ENCODE measurements at regions of chr1 and their contacts with region 1.

Region 1: DNA sequence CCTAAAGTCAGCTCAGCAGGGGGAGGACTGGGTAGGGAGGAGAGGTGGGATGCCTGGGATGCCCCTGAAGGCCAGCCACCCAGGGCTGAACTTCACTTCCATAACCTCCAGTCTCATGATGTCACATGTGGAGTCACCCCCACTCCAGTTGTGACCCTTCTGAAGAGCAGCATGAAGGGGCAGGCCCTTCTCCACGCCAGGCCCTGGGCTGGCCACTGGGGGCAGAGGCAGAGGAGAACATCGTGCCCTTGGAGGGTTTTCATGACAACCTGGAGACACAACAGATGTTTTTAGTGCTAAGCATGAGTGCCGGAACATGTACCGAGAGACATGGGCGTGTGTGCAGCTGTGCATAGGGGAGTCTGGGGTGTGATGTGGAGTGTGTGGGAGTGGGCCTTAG is 37.6 kb downstream of the FAAH start:
- DNase-seq: no peak
- H3K4me3 ChIP-seq: no peak overlapping the region
- H3K27ac ChIP-seq: no peak overlapping the region
- H3K4me1 ChIP-seq: no peaks in the 10 kb centered on the region
- H3K27me3 ChIP-seq: peaks cover 0 to 7% (median 3%) of the 10 kb centered on the region in 5 experiments

Region 2: DNA sequence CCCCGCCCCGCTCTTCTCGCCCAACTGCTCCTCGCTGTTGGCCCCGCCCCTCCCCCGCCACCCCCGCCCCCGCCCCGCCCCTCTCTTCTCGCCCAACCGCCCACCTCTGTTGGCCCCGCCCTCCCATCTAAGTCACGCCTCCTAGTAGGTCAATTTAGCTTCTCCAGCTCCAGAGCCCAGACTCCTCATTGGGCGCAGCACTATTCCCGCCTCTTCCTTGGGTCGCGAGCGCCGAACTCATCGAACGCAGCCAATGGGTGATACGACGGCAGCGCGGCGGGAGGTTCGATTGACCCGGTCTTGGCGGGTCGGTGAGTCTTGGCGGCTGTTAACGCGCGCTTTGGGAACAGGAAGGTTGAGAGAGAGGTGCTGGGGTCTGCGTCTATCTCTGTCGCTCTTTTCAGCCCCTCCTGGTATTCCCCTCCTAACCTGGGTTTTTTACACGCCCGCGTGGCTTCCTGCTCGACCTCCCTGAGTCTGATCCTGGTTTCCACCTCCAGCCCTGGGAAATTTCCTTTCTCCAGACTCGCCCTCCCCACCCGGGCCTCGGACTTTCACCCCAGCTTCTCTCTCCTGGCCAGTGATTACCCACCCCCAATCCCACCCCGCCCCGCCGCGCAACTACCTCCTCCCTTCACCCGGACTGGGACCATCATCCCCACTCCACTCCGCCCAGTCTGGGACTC is 184.1 kb before region 1 on chr1 and contains the start of gene RAD54L:
- CTCF ChIA-PET with region 1: no interaction called
- POLR2A ChIA-PET with region 1: no interaction called
- DNase-seq: peak; percentile 98 to 99 (median 99)
- H3K4me3 ChIP-seq: peak within 1 kb of the TSS; percentile 88 to 97 (median 90)
- H3K27ac ChIP-seq: peak within 1 kb of the TSS; percentile 71 to 91
- H3K4me1 ChIP-seq: peaks cover 10 to 28% (median 24%) of the 10 kb centered on the region in 4 experiments
- H3K27me3 ChIP-seq: no peaks in the 10 kb centered on the region

Region 3: DNA sequence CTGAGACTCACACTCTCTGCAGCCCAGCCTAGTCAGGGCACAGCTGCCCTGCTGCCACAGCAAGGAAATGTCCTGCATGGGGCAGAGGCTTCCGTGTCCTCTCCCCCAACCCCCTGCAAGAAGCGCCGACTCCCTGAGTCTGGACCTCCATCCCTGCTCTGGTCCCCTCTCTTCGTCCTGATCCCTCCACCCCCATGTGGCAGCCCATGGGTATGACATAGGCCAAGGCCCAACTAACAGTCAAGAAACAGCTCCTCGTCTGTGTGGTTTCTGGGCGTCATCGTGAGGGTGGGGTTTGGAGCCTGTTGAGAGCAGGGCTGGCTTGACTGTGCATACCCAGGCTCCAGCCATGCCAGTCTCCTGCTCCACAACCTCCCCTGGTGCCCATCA is 18.1 kb before region 1 on chr1:
- CTCF ChIA-PET with region 1: interaction called, 11 read pairs
- POLR2A ChIA-PET with region 1: interaction called, 3 read pairs
- DNase-seq: peak; percentile 33 to 67 (median 58)
- H3K4me3 ChIP-seq: no peak overlapping the region
- H3K27ac ChIP-seq: no peak overlapping the region
- H3K4me1 ChIP-seq: no peaks in the 10 kb centered on the region
- H3K27me3 ChIP-seq: peaks cover 0 to 2% (median 0%) of the 10 kb centered on the region in 5 experiments

Region 4: GRCh38 chr1:46442317-46443161 is 10.8 kb after region 1 on chr1:
- CTCF ChIA-PET with region 1: interaction called, 33 read pairs
- POLR2A ChIA-PET with region 1: interaction called, 3 read pairs
- DNase-seq: peak; percentile 84 to 90 (median 89)
- H3K4me3 ChIP-seq: peak overlapping the region; percentile 33 to 86 (median 64)
- H3K27ac ChIP-seq: peak overlapping the region in 1 of 2 experiments; percentile 62
- H3K4me1 ChIP-seq: peaks cover 0 to 21% (median 12%) of the 10 kb centered on the region in 4 experiments
- H3K27me3 ChIP-seq: peaks cover 2 to 23% (median 12%) of the 10 kb centered on the region in 5 experiments

Region 5: GRCh38 chr1:46603858-46604549 is 172.3 kb after region 1 on chr1 and contains the start of gene MKNK1:
- CTCF ChIA-PET with region 1: no interaction called
- POLR2A ChIA-PET with region 1: no interaction called
- DNase-seq: peak; percentile 93 to 97 (median 95)
- H3K4me3 ChIP-seq: peak within 1 kb of the TSS; percentile 86 to 98 (median 90)
- H3K27ac ChIP-seq: peak within 1 kb of the TSS in 1 of 2 experiments; percentile 69
- H3K4me1 ChIP-seq: peaks cover 8 to 58% (median 30%) of the 10 kb centered on the region in 4 experiments
- H3K27me3 ChIP-seq: no peaks in the 10 kb centered on the region

Measured in common myeloid progenitor, CD34-positive (primary cell).